Transverse colon (tissue), 4 donors: ENCODE measurements at regions of chr9 and their contacts with region 1.

Region 1: DNA sequence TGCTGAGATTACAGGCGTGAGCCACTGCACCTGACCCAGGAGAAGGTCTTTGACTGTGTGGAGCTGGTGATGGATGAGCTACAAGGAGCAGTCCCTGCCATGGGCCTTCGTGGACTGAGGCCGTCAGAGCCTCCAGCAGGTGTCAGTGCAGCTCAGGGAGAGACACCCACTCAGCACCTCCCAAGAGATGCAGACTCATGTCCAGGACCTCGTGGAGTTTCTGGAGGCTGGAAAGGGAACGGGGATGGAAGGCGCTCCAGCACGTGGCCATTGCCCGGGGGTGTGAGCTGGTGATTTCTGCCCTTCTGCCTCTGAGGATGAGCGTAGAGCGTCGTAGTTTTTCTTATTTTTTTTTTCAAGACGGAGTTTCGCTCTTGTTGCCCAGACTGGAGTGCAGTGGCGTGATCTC is 9.5 kb downstream of the TOR4A start:
- DNase-seq: peak; percentile 84
- H3K4me3 ChIP-seq: no peak overlapping the region
- H3K27ac ChIP-seq: no peak overlapping the region
- H3K4me1 ChIP-seq: no peaks in the 10 kb centered on the region
- H3K27me3 ChIP-seq: no peaks in the 10 kb centered on the region
- CTCF ChIP-seq: peak; percentile 43 to 83 (median 51)
- EP300 ChIP-seq: no peak
- POLR2A ChIP-seq: no peak

Region 2: GRCh38 chr9:136023410-136024225 is 1263.4 kb before region 1 on chr9:
- in situ Hi-C with region 1: no loop called
- intact Hi-C with region 1: no loop called
- DNase-seq: no peak
- H3K4me3 ChIP-seq: no peak overlapping the region
- H3K27ac ChIP-seq: peak overlapping the region in 1 of 4 donors; percentile 1
- H3K4me1 ChIP-seq: peaks cover 0 to 7% (median 3%) of the 10 kb centered on the region in 4 donors
- H3K27me3 ChIP-seq: no peaks in the 10 kb centered on the region
- CTCF ChIP-seq: no peak
- EP300 ChIP-seq: no peak
- POLR2A ChIP-seq: no peak

Region 3: GRCh38 chr9:137390543-137391410 is 103.8 kb after region 1 on chr9:
- in situ Hi-C with region 1: no loop called
- intact Hi-C with region 1: no loop called
- DNase-seq: peak; percentile 57
- H3K4me3 ChIP-seq: no peak overlapping the region
- H3K27ac ChIP-seq: peak overlapping the region; percentile 63 to 86 (median 73)
- H3K4me1 ChIP-seq: peaks cover 5 to 14% (median 10%) of the 10 kb centered on the region in 4 donors
- H3K27me3 ChIP-seq: no peaks in the 10 kb centered on the region
- CTCF ChIP-seq: no peak
- EP300 ChIP-seq: no peak
- POLR2A ChIP-seq: no peak

Region 4: GRCh38 chr9:137406876-137407589 is 120.1 kb after region 1 on chr9:
- in situ Hi-C with region 1: loop called (anchors 10 to 25 kb)
- intact Hi-C with region 1: no loop called
- DNase-seq: peak; percentile 79
- H3K4me3 ChIP-seq: peak overlapping the region in 3 of 4 donors; percentile 9 to 47 (median 38)
- H3K27ac ChIP-seq: peak overlapping the region; percentile 49 to 64 (median 54)
- H3K4me1 ChIP-seq: peaks cover 19 to 47% (median 28%) of the 10 kb centered on the region in 4 donors
- H3K27me3 ChIP-seq: no peaks in the 10 kb centered on the region
- CTCF ChIP-seq: peak; percentile 58 to 93 (median 78)
- EP300 ChIP-seq: no peak
- POLR2A ChIP-seq: no peak